ENCODE measurements at regions of chr9 and their contacts with region 1.

Region 1: DNA sequence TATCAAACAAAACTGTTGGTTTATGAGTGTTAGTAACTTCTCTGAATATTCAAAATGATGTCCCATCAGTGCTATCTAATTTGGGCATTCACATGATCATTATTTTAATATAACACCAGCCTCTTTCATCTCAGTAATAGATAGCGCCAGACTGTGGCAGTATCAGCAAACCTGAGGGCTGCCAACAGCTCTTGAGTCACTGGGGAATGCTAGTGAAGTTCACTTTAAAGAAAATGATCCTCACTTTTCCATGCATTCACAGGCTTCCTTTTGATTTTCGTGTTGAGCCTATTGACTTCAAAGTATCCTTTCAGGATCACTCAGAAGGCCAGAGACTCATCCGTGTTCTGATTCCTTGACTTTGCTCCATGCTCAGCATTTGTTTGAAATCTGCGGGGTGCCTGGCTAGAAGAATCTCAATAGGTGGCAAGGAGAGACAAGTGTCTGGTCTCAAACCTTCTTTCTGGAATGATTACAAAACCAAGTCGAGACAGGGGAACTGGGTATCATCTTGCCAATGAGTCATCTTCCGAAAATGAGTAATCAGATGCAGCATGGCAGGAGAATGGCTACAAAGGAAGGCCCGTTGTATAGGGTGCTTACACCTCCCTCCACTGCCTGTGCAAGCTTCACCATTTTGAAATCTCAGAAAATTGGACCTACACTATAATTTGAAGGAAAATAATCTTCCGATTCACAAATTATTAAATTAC is 509.1 kb downstream of the RASEF start:
- DNase-seq: no peak
- ATAC-seq: no peak
- H3K4me3 ChIP-seq: no peak overlapping the region
- H3K27ac ChIP-seq: no peak overlapping the region
- H3K4me1 ChIP-seq: peaks cover 0 to 33% (median 8%) of the 10 kb centered on the region in 12 donors
- H3K27me3 ChIP-seq: no peaks in the 10 kb centered on the region
- CTCF ChIP-seq: no peak
- POLR2A ChIP-seq: no peak

Region 2: GRCh38 chr9:82488313-82489200 is 65.3 kb before region 1 on chr9:
- intact Hi-C with region 1: loop called in 2 of 10 experiments (anchors 5 kb)
- DNase-seq: peak in 3 of 5 donors; percentile 41 to 57 (median 55)
- ATAC-seq: peak; percentile 79 to 92 (median 86)
- H3K4me3 ChIP-seq: peak overlapping the region in 1 of 12 donors; percentile 1
- H3K27ac ChIP-seq: peak overlapping the region; percentile 64 to 86 (median 76)
- H3K4me1 ChIP-seq: peaks cover 0 to 31% (median 16%) of the 10 kb centered on the region in 12 donors
- H3K27me3 ChIP-seq: no peaks in the 10 kb centered on the region
- CTCF ChIP-seq: no peak
- POLR2A ChIP-seq: no peak

Region 3: GRCh38 chr9:82584349-82584863 is 30.6 kb after region 1 on chr9:
- intact Hi-C with region 1: loop called in 1 of 10 experiments (anchors 5 kb)
- DNase-seq: no peak
- ATAC-seq: no peak
- H3K4me3 ChIP-seq: no peak overlapping the region
- H3K27ac ChIP-seq: no peak overlapping the region
- H3K4me1 ChIP-seq: no peaks in the 10 kb centered on the region
- H3K27me3 ChIP-seq: no peaks in the 10 kb centered on the region
- CTCF ChIP-seq: no peak
- POLR2A ChIP-seq: no peak

Measured in heart left ventricle (tissue), 16 donors.